ENCODE measurements at regions of chr14 and their contacts with region 1.

Region 1: GRCh38 chr14:64986578-64987571 is at the start of gene FNTB:
- DNase-seq: peak; percentile 97
- H3K4me3 Mint-ChIP-seq: peak within 1 kb of the TSS; percentile 79
- H3K27ac Mint-ChIP-seq: peak within 1 kb of the TSS; percentile 76
- H3K4me1 Mint-ChIP-seq: peaks cover 10% of the 10 kb centered on the region
- H3K27me3 Mint-ChIP-seq: peaks cover 12% of the 10 kb centered on the region
- CTCF ChIP-seq: peak; percentile 45
- total RNA-seq, gene FNTB: 12.2 and 13.1 TPM in 2 replicates

Region 2: DNA sequence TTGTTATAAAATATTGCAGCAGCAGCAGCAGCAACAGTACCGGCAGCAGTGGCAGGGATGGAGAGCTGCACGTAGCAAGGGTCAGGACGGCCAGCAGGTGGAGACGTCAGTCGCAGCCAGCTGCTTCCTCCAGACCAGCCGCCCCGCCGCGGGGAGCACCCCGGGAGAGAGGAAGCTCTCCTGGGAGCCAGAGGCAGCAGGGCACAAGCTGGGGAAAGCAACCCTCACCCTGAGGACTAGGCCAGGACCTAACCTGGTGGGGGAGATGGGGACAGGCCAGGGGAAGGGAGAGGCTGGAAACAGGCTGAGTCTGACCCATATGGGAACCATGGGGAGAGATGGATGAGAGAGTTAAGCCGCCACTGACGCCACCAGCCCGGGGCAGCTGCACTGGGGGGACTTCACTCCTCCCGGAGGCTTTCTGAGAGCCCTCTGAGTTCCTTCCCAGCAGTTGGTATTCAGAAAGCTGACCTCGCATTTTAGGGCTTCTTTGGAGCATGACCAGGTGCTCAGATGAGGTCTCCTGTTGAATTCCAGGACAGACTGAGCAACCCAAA is 163.5 kb before region 1 on chr14:
- CTCF ChIA-PET with region 1: interaction called, 4 read pairs
- POLR2A ChIA-PET with region 1: no interaction called
- intact Hi-C with region 1: loop called (anchors 2 kb)
- DNase-seq: peak; percentile 65
- H3K4me3 Mint-ChIP-seq: no peak overlapping the region
- H3K27ac Mint-ChIP-seq: no peak overlapping the region
- H3K4me1 Mint-ChIP-seq: peaks cover 17% of the 10 kb centered on the region
- H3K27me3 Mint-ChIP-seq: peaks cover 24% of the 10 kb centered on the region
- CTCF ChIP-seq: peak; percentile 68

Region 3: GRCh38 chr14:64870160-64870559 is 116.7 kb before region 1 on chr14:
- CTCF ChIA-PET with region 1: no interaction called
- POLR2A ChIA-PET with region 1: no interaction called
- intact Hi-C with region 1: no loop called
- DNase-seq: no peak
- H3K4me3 Mint-ChIP-seq: no peak overlapping the region
- H3K27ac Mint-ChIP-seq: no peak overlapping the region
- H3K4me1 Mint-ChIP-seq: no peaks in the 10 kb centered on the region
- H3K27me3 Mint-ChIP-seq: peaks cover 71% of the 10 kb centered on the region
- CTCF ChIP-seq: no peak

Region 4: DNA sequence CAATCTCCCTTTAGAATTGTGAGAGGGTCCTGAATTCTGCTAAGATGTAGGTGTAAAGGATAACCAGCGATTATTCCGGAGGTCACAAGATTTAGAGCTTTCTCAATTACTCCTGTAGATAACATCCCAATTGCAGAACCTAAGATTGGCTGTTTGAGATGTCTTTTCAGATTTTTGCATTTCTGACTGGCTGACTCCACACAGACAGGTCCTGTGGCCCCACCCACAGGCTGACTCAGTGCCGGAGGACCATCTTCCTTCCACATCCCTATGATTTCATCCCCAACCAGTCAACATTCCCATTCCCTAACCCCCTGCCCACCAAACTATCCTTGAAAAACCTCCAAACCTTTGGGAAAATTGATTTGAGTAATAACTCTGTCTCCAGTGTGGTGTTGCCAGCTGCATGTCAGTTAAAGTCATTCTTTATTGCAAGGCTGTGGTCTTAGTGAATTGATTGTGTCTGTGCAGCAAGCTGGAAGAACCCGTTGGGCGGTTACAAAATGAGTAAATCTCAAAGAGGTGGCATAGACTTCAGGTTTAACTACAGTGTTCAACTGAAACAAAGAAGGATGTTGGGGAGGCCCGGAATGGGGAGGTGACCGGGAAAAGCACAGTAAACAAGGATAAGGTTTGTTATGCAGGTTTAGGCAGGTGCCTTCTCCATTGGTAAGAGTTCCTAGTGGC is 10.4 kb after region 1 on chr14:
- CTCF ChIA-PET with region 1: interaction called, 11 read pairs
- POLR2A ChIA-PET with region 1: interaction called, 55 read pairs
- intact Hi-C with region 1: no loop called
- DNase-seq: no peak
- H3K4me3 Mint-ChIP-seq: no peak overlapping the region
- H3K27ac Mint-ChIP-seq: no peak overlapping the region
- H3K4me1 Mint-ChIP-seq: peaks cover 5% of the 10 kb centered on the region
- H3K27me3 Mint-ChIP-seq: no peaks in the 10 kb centered on the region
- CTCF ChIP-seq: no peak

Region 5: DNA sequence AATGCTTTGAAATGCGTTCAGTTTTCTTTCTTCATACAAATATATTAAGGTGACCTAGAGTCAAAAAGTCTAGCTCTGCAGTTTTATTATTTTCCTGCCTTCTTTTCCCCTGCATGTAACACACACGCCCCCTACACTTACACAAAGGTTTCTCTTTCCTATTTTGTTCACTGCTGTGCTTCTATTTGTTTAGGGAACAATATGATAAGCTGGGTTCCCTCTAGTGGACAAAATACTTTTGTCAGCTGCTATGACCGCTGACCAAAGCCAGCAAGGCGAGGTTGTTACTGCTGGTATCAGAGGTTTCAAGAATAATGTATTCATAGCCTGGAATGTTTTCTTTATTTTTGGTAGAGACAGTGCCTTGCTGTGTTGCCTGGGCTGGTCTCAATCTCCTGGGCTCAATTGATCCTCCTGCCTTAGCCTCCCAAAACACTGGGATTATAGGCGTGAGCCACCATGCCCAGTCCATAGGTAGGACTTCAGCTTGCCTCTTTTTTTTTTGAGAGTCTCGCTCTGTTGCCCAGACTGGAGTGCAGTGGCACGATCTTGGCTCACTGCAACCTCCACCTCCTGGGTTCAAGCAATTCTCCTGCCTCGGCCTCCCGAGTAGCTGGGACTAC is 33.2 kb after region 1 on chr14:
- CTCF ChIA-PET with region 1: interaction called, 24 read pairs
- POLR2A ChIA-PET with region 1: interaction called, 13 read pairs
- intact Hi-C with region 1: loop called (anchors 1 kb)
- DNase-seq: peak; percentile 51
- H3K4me3 Mint-ChIP-seq: no peak overlapping the region
- H3K27ac Mint-ChIP-seq: no peak overlapping the region
- H3K4me1 Mint-ChIP-seq: no peaks in the 10 kb centered on the region
- H3K27me3 Mint-ChIP-seq: no peaks in the 10 kb centered on the region
- CTCF ChIP-seq: peak; percentile 52

Region 6: GRCh38 chr14:65080960-65081747 is 94.3 kb after region 1 on chr14:
- CTCF ChIA-PET with region 1: no interaction called
- POLR2A ChIA-PET with region 1: no interaction called
- intact Hi-C with region 1: no loop called
- DNase-seq: no peak
- H3K4me3 Mint-ChIP-seq: no peak overlapping the region
- H3K27ac Mint-ChIP-seq: no peak overlapping the region
- H3K4me1 Mint-ChIP-seq: no peaks in the 10 kb centered on the region
- H3K27me3 Mint-ChIP-seq: no peaks in the 10 kb centered on the region
- CTCF ChIP-seq: no peak

Region 7: GRCh38 chr14:65156568-65157366 is 169.9 kb after region 1 on chr14:
- CTCF ChIA-PET with region 1: interaction called, 3 read pairs
- POLR2A ChIA-PET with region 1: interaction called, 3 read pairs
- intact Hi-C with region 1: loop called (anchors 5 kb)
- DNase-seq: peak; percentile 61
- H3K4me3 Mint-ChIP-seq: no peak overlapping the region
- H3K27ac Mint-ChIP-seq: no peak overlapping the region
- H3K4me1 Mint-ChIP-seq: no peaks in the 10 kb centered on the region
- H3K27me3 Mint-ChIP-seq: no peaks in the 10 kb centered on the region
- CTCF ChIP-seq: no peak

Measured in MCF 10A (cell line).